ENCODE measurements at regions of chr13 and their contacts with region 1.

Region 1: DNA sequence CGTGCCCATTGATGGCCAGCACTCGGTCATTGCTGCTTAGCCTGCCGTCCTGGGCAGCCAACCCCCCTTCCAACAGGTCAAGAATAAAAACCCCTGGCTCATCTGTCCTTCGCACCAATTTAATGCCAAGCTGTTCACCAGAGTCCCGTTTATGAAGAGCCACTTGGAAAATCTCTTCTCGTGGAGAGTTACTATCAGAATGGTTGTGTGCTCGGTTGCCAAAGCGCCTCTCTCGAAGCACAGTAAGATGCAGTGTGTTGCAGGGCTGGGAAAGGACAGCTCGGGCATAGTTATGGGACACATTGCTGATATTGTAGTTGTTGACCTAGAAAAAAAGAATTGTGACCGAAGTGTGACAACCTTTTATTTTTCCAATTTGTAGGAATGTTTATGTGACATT is 57.9 kb downstream of the LNX2 start:
- DNase-seq: peak in 1 of 2 donors; percentile 38
- ATAC-seq: peak in 7 of 8 donors; percentile 58 to 98 (median 91)
- H3K4me3 ChIP-seq: no peak overlapping the region
- H3K27ac ChIP-seq: peak overlapping the region in 7 of 10 donors; percentile 2 to 64 (median 47)
- H3K4me1 ChIP-seq: peaks cover 0 to 12% (median 6%) of the 10 kb centered on the region in 9 donors
- H3K27me3 ChIP-seq: no peaks in the 10 kb centered on the region
- CTCF ChIP-seq: no peak

Region 2: DNA sequence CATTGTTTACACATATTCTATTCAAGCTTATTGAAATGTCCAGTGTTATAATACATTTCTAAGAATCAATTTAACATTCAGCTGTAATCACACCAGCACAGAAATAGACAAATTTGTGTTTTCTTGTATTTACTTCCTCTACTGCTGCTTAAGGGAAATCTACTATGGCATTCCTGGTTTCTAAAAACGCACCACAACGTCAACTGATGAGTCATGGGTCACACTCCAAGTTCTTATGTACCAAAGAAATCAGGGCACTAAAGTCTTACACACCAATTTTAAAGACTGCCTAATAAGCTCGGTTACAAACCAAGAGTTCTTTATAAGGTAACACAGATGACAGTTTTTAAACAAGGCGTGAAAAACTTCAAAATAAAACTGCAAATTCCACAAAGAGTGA is 44.7 kb after region 1 on chr13:
- intact Hi-C with region 1: loop called in 1 of 10 experiments (anchors 2 kb)
- DNase-seq: peak in 1 of 2 donors; percentile 23
- ATAC-seq: peak in 7 of 8 donors; percentile 52 to 91 (median 76)
- H3K4me3 ChIP-seq: no peak overlapping the region
- H3K27ac ChIP-seq: peak overlapping the region in 9 of 10 donors; percentile 1 to 68 (median 61)
- H3K4me1 ChIP-seq: peaks cover 0 to 56% (median 33%) of the 10 kb centered on the region in 9 donors
- H3K27me3 ChIP-seq: no peaks in the 10 kb centered on the region
- CTCF ChIP-seq: no peak